ENCODE measurements at regions of chr17 and their contacts with region 1.

Region 1: DNA sequence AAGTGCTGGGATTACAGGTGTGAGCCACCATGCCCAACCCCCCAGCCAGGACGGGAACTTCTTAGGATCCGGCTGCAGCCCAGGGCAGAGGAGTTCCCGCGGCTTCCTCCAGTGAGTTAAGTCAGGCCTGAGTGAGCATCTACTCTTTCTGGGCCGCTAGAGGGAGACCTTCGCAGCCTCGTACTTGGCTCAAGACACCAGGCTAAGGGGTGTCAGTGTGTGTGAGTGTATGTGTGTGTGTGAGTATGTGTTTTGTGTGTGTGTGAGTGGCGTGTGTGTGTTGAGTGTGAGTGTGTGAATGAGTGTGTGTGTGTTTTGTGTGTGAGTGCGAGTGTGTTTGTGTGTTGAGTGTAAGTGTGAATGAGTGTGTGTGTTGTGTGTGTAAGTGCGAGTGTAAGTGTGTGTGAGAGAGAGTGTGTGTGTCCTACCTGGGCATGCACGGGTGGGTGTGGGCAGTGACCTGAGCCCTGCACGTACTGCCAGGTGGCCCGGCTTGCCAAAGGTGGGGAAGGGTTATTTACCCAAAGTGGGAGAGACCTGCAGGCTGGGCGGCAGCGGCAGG is 58.5 kb downstream of the TMEM235 start:
- DNase-seq: peak; percentile 89
- ATAC-seq: peak; percentile 98
- H3K4me3 ChIP-seq: no peak overlapping the region
- H3K4me3 Mint-ChIP-seq: no peak overlapping the region
- H3K27ac ChIP-seq: no peak overlapping the region
- H3K27ac Mint-ChIP-seq: no peak overlapping the region
- H3K4me1 ChIP-seq: peaks cover 3 to 10% of the 10 kb centered on the region in 2 donors
- H3K4me1 Mint-ChIP-seq: no peaks in the 10 kb centered on the region
- H3K27me3 ChIP-seq: no peaks in the 10 kb centered on the region
- H3K27me3 Mint-ChIP-seq: no peaks in the 10 kb centered on the region
- CTCF ChIP-seq: peak; percentile 74

Region 2: GRCh38 chr17:78092794-78093324 is 197.0 kb before region 1 on chr17:
- CTCF ChIA-PET with region 1: no interaction called
- POLR2A ChIA-PET with region 1: no interaction called
- intact Hi-C with region 1: no loop called
- DNase-seq: no peak
- ATAC-seq: no peak
- H3K4me3 ChIP-seq: no peak overlapping the region
- H3K4me3 Mint-ChIP-seq: no peak overlapping the region
- H3K27ac ChIP-seq: no peak overlapping the region
- H3K27ac Mint-ChIP-seq: no peak overlapping the region
- H3K4me1 ChIP-seq: no peaks in the 10 kb centered on the region
- H3K4me1 Mint-ChIP-seq: no peaks in the 10 kb centered on the region
- H3K27me3 ChIP-seq: no peaks in the 10 kb centered on the region
- H3K27me3 Mint-ChIP-seq: no peaks in the 10 kb centered on the region
- CTCF ChIP-seq: no peak

Region 3: DNA sequence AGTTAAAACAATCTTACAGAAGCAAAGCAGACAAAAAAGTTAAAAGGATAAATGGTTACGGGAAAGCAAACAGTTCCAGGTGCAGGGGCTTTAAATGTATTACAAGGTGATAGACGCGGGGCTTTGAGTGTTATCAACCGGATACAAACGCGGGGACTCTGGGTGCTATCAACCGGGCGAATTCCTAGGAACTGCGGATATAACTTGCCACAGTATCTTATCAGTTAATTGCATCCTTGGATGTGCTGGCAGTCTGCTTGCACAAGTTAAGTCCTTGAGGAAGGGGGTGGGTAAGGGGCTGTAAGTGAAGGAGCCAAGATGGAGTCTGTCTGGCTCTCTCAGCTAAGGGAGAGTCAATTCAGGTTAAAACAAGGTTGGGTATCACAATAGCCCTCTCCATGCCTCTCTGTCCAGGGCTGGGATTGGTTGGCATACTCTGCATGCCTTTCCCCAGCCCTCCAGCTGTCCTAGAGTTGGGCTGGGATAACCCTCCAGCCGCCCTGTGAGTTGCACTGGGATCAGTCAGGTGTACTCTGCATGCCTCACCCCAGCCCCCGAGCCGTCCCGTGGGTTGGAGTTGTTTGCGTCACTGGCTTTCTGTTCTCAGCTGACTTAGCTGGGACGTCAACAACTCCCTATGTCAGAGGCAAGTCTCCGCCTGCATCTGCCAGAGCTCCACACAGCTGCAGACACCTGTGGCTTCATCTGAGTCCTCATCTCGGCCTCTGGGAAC is 17.5 kb before region 1 on chr17:
- CTCF ChIA-PET with region 1: interaction called, 22 read pairs
- POLR2A ChIA-PET with region 1: interaction called, 7 read pairs
- intact Hi-C with region 1: no loop called
- DNase-seq: peak; percentile 80
- ATAC-seq: peak; percentile 70
- H3K4me3 ChIP-seq: no peak overlapping the region
- H3K4me3 Mint-ChIP-seq: peak overlapping the region; percentile 68
- H3K27ac ChIP-seq: no peak overlapping the region
- H3K27ac Mint-ChIP-seq: peak overlapping the region; percentile 83
- H3K4me1 ChIP-seq: peaks cover 4 to 33% of the 10 kb centered on the region in 2 donors
- H3K4me1 Mint-ChIP-seq: peaks cover 43% of the 10 kb centered on the region
- H3K27me3 ChIP-seq: peaks cover 0 to 23% (median 10%) of the 10 kb centered on the region in 4 experiments
- H3K27me3 Mint-ChIP-seq: peaks cover 25% of the 10 kb centered on the region
- CTCF ChIP-seq: no peak

Measured in B cell (primary cell).